ENCODE measurements at regions of chr2 and their contacts with region 1.

Region 1: GRCh38 chr2:30237966-30238800 is 6.8 kb downstream of the LBH start:
- DNase-seq: no peak
- ATAC-seq: no peak
- H3K4me3 ChIP-seq: no peak overlapping the region
- H3K27ac ChIP-seq: no peak overlapping the region
- H3K4me1 ChIP-seq: peaks cover 8% of the 10 kb centered on the region; the same call in 1 of the 2 replicates
- H3K27me3 ChIP-seq: peaks cover 17% of the 10 kb centered on the region
- CTCF ChIP-seq: no peak

Region 2: GRCh38 chr2:30201990-30202389 is 36.2 kb before region 1 on chr2:
- CTCF ChIA-PET with region 1: no interaction called
- POLR2A ChIA-PET with region 1: no interaction called
- in situ Hi-C with region 1: no loop called
- intact Hi-C with region 1: no loop called
- DNase-seq: no peak
- ATAC-seq: no peak
- H3K4me3 ChIP-seq: no peak overlapping the region
- H3K27ac ChIP-seq: no peak overlapping the region
- H3K4me1 ChIP-seq: no peaks in the 10 kb centered on the region
- H3K27me3 ChIP-seq: peaks cover 5% of the 10 kb centered on the region
- CTCF ChIP-seq: no peak

Region 3: DNA sequence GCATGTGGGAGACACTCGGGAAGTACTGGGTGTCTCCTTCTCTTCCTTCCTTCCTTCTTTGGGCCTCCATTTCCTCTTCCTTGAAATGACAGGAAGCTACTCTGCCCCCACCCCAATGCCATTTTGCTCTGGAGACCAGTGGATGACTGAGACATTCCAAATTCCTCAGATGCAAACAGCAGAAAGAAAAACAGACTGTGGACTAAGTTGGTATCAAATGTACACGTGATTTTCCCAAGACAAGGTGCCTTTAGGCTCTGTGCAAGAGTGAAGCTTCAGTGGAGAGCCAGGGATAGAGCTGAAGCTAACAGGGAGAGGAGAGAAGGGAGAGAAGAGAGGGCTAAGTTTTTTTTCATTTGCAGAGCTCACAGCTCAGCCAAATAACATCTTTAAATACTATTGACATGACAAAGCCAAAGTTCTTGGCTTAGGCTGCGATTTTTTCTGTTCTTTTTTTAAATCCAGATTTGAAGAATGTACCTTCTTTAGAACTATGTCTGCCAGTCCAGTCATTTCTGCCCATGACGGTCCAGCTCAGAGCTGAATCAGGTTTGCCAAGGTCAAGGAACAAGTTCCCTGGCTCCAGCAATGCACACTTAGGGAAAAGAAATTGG is 124.4 kb after region 1 on chr2:
- CTCF ChIA-PET with region 1: no interaction called
- POLR2A ChIA-PET with region 1: interaction called, 12 read pairs
- in situ Hi-C with region 1: no loop called
- intact Hi-C with region 1: no loop called
- DNase-seq: no peak
- ATAC-seq: no peak
- H3K4me3 ChIP-seq: no peak overlapping the region
- H3K27ac ChIP-seq: no peak overlapping the region
- H3K4me1 ChIP-seq: no peaks in the 10 kb centered on the region
- H3K27me3 ChIP-seq: no peaks in the 10 kb centered on the region; the same call in 1 of the 2 replicates
- CTCF ChIP-seq: no peak